Transverse colon (tissue), 4 donors: ENCODE measurements at regions of chr2 and their contacts with region 1.

Region 1: DNA sequence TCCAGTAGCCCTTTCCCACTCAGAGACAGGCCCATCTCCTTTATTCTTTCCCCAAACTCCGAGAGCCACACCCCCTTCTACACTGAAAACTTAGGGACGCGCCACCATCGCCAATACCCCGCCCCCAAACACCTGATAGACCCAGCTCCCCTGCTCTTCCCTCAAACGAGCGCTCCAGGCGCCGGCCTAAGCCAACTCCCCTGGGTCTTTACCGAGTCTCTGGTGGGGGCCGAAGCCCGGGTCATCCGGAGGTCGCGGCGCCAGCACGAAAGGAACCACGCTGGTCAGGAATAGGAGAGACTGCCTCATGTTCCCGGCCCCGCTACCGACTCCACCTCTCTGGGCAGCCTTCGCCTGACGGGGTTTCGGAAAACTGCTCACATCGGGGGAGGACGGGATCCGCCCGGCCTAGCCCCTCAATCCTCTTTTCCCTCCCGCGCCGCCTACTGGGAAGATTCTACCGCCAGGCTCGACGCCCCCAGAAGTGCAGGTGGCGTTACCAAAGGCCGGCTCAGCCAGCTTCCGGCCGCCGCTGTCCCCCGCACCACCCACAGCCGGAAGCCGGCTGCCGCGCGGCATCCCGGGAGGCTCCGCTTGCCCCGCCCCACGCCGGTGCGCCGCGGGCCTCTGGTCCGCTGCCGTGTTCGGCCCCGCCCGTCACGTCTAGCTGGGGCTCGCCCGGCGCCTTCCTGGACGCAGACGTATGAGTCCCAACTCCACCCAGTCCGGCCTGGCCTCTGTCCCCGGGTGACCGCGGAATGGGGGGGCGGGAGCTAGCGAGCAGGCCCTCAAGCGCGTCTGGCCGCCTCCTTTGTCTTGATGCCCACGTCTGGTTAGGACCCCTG is at the start of gene ADAM17:
- DNase-seq: peak; percentile 97
- H3K4me3 ChIP-seq: peak within 1 kb of the TSS; percentile 60 to 91 (median 84)
- H3K27ac ChIP-seq: peak within 1 kb of the TSS; percentile 94 to 98 (median 98)
- H3K4me1 ChIP-seq: peaks cover 22 to 48% (median 29%) of the 10 kb centered on the region in 4 donors
- H3K27me3 ChIP-seq: no peaks in the 10 kb centered on the region
- CTCF ChIP-seq: peak; percentile 48 to 92 (median 61)
- EP300 ChIP-seq: peak; percentile 61
- POLR2A ChIP-seq: peak; percentile 97
- total RNA-seq, gene ADAM17: 11.2 to 36.4 (median 17.0) TPM

Region 2: GRCh38 chr2:9630749-9631483 is 75.4 kb after region 1 on chr2 and contains the start of gene YWHAQ:
- in situ Hi-C with region 1: loop called in 1 of 4 experiments (anchors 10 kb)
- intact Hi-C with region 1: loop called (anchors 5 kb)
- DNase-seq: peak; percentile 99
- H3K4me3 ChIP-seq: peak within 1 kb of the TSS; percentile 58 to 96 (median 79)
- H3K27ac ChIP-seq: peak within 1 kb of the TSS; percentile 92 to 97 (median 96)
- H3K4me1 ChIP-seq: peaks cover 15 to 44% (median 33%) of the 10 kb centered on the region in 4 donors
- H3K27me3 ChIP-seq: no peaks in the 10 kb centered on the region
- CTCF ChIP-seq: no peak
- EP300 ChIP-seq: no peak
- POLR2A ChIP-seq: peak; percentile 95
- total RNA-seq, gene YWHAQ: 84.0 to 189 (median 145) TPM

Region 3: GRCh38 chr2:9675415-9676351 is 120.2 kb after region 1 on chr2:
- in situ Hi-C with region 1: no loop called
- intact Hi-C with region 1: no loop called
- DNase-seq: no peak
- H3K4me3 ChIP-seq: no peak overlapping the region
- H3K27ac ChIP-seq: peak overlapping the region in 2 of 4 donors; percentile 16 to 22
- H3K4me1 ChIP-seq: peaks cover 0 to 10% (median 2%) of the 10 kb centered on the region in 4 donors
- H3K27me3 ChIP-seq: no peaks in the 10 kb centered on the region
- CTCF ChIP-seq: no peak
- EP300 ChIP-seq: no peak
- POLR2A ChIP-seq: no peak

Region 4: DNA sequence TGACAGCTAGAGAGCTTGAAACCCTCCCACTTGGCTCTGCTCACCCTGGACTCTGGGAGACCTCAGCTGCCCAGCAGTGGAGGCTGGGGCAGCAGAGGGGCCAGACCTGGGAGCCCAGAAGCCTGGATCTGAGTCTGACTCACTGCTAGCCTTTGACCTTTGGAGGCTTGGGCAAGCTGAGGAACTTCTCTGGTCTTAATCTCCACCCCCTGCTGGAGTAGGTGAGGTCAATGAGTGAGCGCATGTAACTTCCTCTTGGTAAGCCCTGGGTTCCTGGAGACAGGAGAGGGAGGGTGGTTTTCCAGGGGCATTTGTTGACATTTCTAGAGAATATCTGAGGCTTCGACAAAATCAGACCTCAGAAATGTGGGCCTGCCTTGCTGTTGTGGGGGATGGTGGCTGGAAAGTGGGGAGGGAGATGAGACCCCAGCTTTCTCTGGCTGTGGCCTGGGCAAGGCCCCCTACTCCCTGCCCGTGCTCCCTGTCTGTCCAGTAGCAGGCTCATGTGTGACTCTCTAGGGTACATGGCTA is 148.2 kb after region 1 on chr2:
- in situ Hi-C with region 1: no loop called
- intact Hi-C with region 1: no loop called
- DNase-seq: peak; percentile 31
- H3K4me3 ChIP-seq: no peak overlapping the region
- H3K27ac ChIP-seq: no peak overlapping the region
- H3K4me1 ChIP-seq: peaks cover 0 to 14% (median 4%) of the 10 kb centered on the region in 4 donors
- H3K27me3 ChIP-seq: no peaks in the 10 kb centered on the region
- CTCF ChIP-seq: no peak
- EP300 ChIP-seq: no peak
- POLR2A ChIP-seq: no peak